ENCODE measurements at regions of chr3 and their contacts with region 1.

Region 1: DNA sequence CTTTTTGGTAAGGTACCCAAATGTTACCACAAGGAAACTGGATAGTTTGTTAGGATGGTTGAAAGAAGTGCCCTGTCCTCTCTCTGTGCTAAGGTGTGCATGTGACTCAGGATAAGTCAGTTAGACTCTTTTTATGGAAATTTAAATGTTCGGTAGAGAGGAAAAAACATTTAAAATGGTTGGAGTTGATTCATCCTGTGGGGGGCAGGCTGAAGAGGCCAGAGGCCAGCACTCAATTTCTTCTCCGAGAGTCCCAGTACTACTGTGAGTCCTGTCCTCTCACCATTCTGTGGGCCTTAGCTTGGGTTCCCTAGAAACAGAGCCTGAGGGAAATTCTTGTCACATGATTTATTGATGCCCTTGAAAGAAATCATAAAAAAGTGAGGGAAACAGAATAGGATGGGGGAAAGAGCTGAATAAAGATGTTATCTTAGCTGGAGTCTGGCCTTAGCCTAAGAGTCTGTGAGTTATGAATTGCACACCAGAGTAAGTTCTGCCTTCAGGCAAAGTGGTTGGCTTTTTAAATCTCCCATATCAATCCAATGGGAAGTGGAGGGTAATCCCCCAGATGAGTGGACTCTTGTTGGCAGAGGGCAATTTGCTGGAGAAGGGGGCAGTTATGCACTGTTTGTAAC is 106.5 kb upstream of the GALNT15 start:
- DNase-seq: no peak
- H3K4me3 ChIP-seq: no peak overlapping the region
- H3K27ac ChIP-seq: no peak overlapping the region
- H3K27me3 ChIP-seq: no peaks in the 10 kb centered on the region
- CTCF ChIP-seq: no peak

Region 2: GRCh38 chr3:16033889-16034687 is 33.9 kb before region 1 on chr3:
- intact Hi-C with region 1: no loop called
- DNase-seq: no peak
- H3K4me3 ChIP-seq: no peak overlapping the region
- H3K27ac ChIP-seq: no peak overlapping the region
- H3K27me3 ChIP-seq: no peaks in the 10 kb centered on the region
- CTCF ChIP-seq: no peak

Region 3: GRCh38 chr3:16085884-16086608 is 18.1 kb after region 1 on chr3:
- intact Hi-C with region 1: loop called in 1 of 2 experiments (anchors 2 kb)
- DNase-seq: peak; percentile 73 to 92 (median 86)
- H3K4me3 ChIP-seq: peak overlapping the region in 26 of 59 donors; percentile 5 to 37 (median 24)
- H3K27ac ChIP-seq: peak overlapping the region; percentile 52 to 98 (median 90)
- H3K27me3 ChIP-seq: no peaks in the 10 kb centered on the region
- CTCF ChIP-seq: peak in 11 of 56 donors; percentile 8 to 36 (median 24)

Measured in dorsolateral prefrontal cortex (tissue), 120 donors.